ENCODE measurements at regions of chr19 and their contacts with region 1.

Region 1: DNA sequence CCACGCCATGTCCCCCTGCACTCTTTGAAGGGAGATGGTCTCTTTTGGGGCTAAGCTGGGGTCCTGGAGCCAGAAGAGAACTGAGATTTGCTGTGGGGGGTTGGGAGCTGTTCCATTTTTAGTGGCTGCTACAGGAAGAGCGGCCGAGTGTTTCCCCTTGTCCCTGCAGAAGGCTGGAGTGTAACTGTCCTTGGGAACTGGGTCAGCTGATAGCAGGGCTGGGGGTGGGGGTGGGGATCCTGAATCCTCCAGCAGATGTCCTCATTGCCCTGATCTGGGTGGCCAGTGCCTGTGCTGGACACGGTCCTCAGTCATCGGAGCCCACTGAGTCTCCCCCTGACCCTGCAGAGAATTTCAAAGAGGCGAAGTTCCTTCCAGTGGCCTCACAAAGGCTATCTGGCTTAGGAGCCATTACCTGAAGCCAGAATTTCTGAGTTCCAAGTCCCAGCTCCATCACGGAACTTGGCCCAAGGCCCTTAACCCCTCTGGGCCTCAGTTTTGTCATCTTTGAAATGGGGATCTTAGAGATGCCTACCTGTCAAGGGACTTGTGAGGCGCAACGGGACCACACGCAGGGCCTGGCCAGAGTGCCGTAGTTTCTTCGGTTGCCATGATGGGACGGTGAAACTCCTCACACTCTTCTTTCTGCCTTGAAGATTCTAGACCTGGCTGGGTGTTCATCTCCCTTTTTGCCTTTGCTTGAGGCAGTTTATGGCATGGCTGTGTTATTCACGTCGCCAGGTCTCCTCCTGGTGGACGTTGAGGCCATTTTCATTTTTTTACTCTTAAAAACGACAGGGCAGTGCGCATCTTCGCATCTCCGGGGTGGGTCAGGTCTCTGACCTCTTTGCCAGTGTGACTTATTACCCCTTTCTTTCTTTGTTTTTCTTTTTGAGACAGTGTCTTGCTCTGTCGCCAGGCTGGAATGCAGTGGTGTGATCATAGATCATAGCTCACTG is 51.9 kb downstream of the DNM2 start:
- DNase-seq: peak; percentile 52 to 86 (median 84)
- ATAC-seq: peak; percentile 75 to 82
- H3K4me3 ChIP-seq: no peak overlapping the region
- H3K27ac ChIP-seq: peak overlapping the region; percentile 90
- H3K4me1 ChIP-seq: peaks cover 21% of the 10 kb centered on the region
- H3K27me3 ChIP-seq: no peaks in the 10 kb centered on the region

Region 2: GRCh38 chr19:10717356-10718204 is 52.2 kb before region 1 on chr19 and contains the start of gene DNM2:
- intact Hi-C with region 1: loop called in 3 of 4 experiments (anchors 5 kb)
- DNase-seq: peak; percentile 98 to 99 (median 99)
- ATAC-seq: peak; percentile 94 to 96
- H3K4me3 ChIP-seq: peak within 1 kb of the TSS; percentile 96
- H3K27ac ChIP-seq: peak within 1 kb of the TSS; percentile 95
- H3K4me1 ChIP-seq: peaks cover 15% of the 10 kb centered on the region
- H3K27me3 ChIP-seq: no peaks in the 10 kb centered on the region
- total RNA-seq, gene DNM2: 176 to 202 (median 189) TPM

Region 3: GRCh38 chr19:10968527-10969135 is 198.8 kb after region 1 on chr19:
- intact Hi-C with region 1: no loop called
- DNase-seq: peak in 1 of 3 donors; percentile 18
- ATAC-seq: peak in 1 of 2 donors; percentile 43
- H3K4me3 ChIP-seq: no peak overlapping the region
- H3K27ac ChIP-seq: peak overlapping the region; percentile 48
- H3K4me1 ChIP-seq: peaks cover 7% of the 10 kb centered on the region
- H3K27me3 ChIP-seq: no peaks in the 10 kb centered on the region

Region 4: GRCh38 chr19:11014403-11014911 is 244.6 kb after region 1 on chr19:
- intact Hi-C with region 1: no loop called
- DNase-seq: peak in 2 of 3 donors; percentile 24 to 28
- ATAC-seq: no peak
- H3K4me3 ChIP-seq: no peak overlapping the region
- H3K27ac ChIP-seq: no peak overlapping the region
- H3K4me1 ChIP-seq: no peaks in the 10 kb centered on the region
- H3K27me3 ChIP-seq: no peaks in the 10 kb centered on the region